Posterior cingulate gyrus (tissue), 11 donors: ENCODE measurements at regions of chr2 and their contacts with region 1.

Region 1: DNA sequence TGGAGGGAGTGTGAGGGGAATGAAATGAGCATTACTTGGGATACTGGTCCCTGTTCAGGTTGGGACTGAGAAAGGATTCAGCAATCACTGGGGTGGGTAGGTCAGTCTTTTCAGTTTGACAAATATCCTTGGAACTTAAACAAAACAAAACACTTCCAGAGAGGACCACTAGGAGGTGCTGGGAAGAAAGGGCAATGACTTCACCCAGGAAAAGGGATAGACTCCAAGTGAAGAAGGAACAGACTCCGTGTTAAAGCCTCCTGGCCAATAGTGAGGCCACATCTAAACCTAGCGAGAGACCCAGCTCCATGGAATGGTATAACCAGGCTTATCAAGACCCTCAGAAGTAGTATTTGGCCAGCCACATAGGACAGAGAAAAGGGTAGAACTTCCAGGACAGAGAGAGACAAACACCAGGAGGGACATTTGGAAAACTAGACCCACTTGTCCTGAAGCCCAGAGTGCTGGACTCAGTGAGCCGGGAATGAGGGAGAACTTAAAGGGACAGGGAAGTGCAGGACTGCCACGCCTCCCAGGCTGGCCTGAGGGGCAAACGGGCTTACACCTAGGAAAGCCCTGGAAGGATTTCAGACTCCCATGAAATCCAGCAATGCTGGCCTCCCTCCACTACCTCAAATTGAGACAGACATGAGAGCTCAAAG is 19.6 kb upstream of the KCNG3 start:
- DNase-seq: peak in 1 of 10 donors; percentile 67

Region 2: DNA sequence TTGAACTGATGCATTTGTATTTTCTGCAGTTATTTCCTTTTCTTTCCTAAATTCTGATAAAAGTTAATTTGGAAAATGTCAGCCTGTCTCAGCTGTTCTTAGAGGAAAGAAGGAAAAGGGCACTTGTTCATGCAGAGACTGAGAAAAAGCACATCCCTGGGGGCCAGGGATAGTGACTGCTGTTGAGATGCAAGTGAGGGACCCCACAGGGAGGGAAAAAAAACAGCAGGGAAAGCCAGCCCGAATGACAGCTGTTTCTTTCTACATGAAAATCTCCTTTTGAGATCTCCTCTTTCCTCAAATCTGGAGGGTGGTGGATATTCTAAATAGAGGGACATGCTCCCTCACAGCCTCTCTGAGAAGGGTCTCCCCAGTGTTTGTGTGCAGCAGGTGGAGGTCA is 41.0 kb after region 1 on chr2:
- intact Hi-C with region 1: no loop called
- DNase-seq: peak in 2 of 10 donors; percentile 7 to 35

Region 3: GRCh38 chr2:42568401-42569115 is 55.2 kb after region 1 on chr2 and contains the start of gene MTA3:
- intact Hi-C with region 1: loop called (anchors 10 kb)
- DNase-seq: peak; percentile 49 to 95 (median 72)

Region 4: GRCh38 chr2:42663106-42663780 is 149.9 kb after region 1 on chr2:
- intact Hi-C with region 1: loop called (anchors 2 kb)
- DNase-seq: peak; percentile 25 to 95 (median 64)

Region 5: GRCh38 chr2:43041661-43042360 is 528.4 kb after region 1 on chr2:
- intact Hi-C with region 1: no loop called
- DNase-seq: peak in 1 of 10 donors; percentile 81